MCF 10A (cell line): ENCODE measurements at regions of chr12 and their contacts with region 1.

Region 1: GRCh38 chr12:71780237-71780822 is 25.7 kb downstream of the RAB21 start:
- DNase-seq: peak; percentile 59
- H3K4me3 Mint-ChIP-seq: no peak overlapping the region
- H3K27ac Mint-ChIP-seq: no peak overlapping the region
- H3K4me1 Mint-ChIP-seq: peaks cover 5% of the 10 kb centered on the region
- H3K27me3 Mint-ChIP-seq: no peaks in the 10 kb centered on the region
- CTCF ChIP-seq: peak; percentile 62

Region 2: GRCh38 chr12:71760471-71760870 is 19.9 kb before region 1 on chr12:
- CTCF ChIA-PET with region 1: interaction called, 16 read pairs
- POLR2A ChIA-PET with region 1: interaction called, 10 read pairs
- intact Hi-C with region 1: no loop called
- DNase-seq: no peak
- H3K4me3 Mint-ChIP-seq: no peak overlapping the region
- H3K27ac Mint-ChIP-seq: no peak overlapping the region
- H3K4me1 Mint-ChIP-seq: no peaks in the 10 kb centered on the region
- H3K27me3 Mint-ChIP-seq: no peaks in the 10 kb centered on the region
- CTCF ChIP-seq: no peak

Region 3: GRCh38 chr12:71840231-71840847 is 60.0 kb after region 1 on chr12:
- CTCF ChIA-PET with region 1: interaction called, 75 read pairs
- POLR2A ChIA-PET with region 1: interaction called, 17 read pairs
- intact Hi-C with region 1: no loop called
- DNase-seq: peak; percentile 76
- H3K4me3 Mint-ChIP-seq: peak overlapping the region; percentile 94
- H3K27ac Mint-ChIP-seq: peak overlapping the region; percentile 100
- H3K4me1 Mint-ChIP-seq: peaks cover 14% of the 10 kb centered on the region
- H3K27me3 Mint-ChIP-seq: no peaks in the 10 kb centered on the region
- CTCF ChIP-seq: no peak

Region 4: GRCh38 chr12:71876137-71876799 is 95.9 kb after region 1 on chr12:
- CTCF ChIA-PET with region 1: interaction called, 11 read pairs
- POLR2A ChIA-PET with region 1: no interaction called
- intact Hi-C with region 1: no loop called
- DNase-seq: no peak
- H3K4me3 Mint-ChIP-seq: no peak overlapping the region
- H3K27ac Mint-ChIP-seq: no peak overlapping the region
- H3K4me1 Mint-ChIP-seq: peaks cover 3% of the 10 kb centered on the region
- H3K27me3 Mint-ChIP-seq: no peaks in the 10 kb centered on the region
- CTCF ChIP-seq: no peak

Region 5: DNA sequence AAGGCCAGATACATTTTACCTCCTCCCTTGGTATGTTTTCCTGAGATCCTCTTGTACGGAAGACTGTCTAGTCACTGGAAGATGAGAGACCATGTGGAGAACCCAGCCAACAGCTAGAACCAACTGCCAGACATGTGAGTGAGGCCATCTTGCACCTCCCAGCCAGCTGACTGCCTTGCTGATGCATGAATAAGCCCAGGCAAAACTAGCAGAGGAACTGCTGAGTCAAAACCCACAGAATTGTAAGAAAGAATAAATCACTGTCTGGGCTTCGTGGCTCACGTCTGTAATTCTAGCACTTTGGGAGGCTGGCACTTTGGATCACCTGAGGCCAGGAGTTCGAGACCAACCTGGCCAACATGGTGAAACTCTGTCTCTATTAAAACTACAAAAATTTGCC is 318.3 kb after region 1 on chr12:
- CTCF ChIA-PET with region 1: no interaction called
- POLR2A ChIA-PET with region 1: no interaction called
- intact Hi-C with region 1: no loop called
- DNase-seq: no peak
- H3K4me3 Mint-ChIP-seq: no peak overlapping the region
- H3K27ac Mint-ChIP-seq: no peak overlapping the region
- H3K4me1 Mint-ChIP-seq: no peaks in the 10 kb centered on the region
- H3K27me3 Mint-ChIP-seq: peaks cover 6% of the 10 kb centered on the region
- CTCF ChIP-seq: no peak